Mammary epithelial cell (primary cell): ENCODE measurements at regions of chr2 and their contacts with region 1.

Region 1: GRCh38 chr2:128321784-128322714 is 3.4 kb upstream of the HS6ST1 start:
- DNase-seq: peak; percentile 67
- H3K4me3 ChIP-seq: peak overlapping the region; percentile 47 to 69 (median 50)
- H3K27ac ChIP-seq: peak overlapping the region; percentile 44
- H3K4me1 ChIP-seq: peaks cover 13% of the 10 kb centered on the region
- H3K27me3 ChIP-seq: no peaks in the 10 kb centered on the region
- CTCF ChIP-seq: peak; percentile 63 to 78

Region 2: DNA sequence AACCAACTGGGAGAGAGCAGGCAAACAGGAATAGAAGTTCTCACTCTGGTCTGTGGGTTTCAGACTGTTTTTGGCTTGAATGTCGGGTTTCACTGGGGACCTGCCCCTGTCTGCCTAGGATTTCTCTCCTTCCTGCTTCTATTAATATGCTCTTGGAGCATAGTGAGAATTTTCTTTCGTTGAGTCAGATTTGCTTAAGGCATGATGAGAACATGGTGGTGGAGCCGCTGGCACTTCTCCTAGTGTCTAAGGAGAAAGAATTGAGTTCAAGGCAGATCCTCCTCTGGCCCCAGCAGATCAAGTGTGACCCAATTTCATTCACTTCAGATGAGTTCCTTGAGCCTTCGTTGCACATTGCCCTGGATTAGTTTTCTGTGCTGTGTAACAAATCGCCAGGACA is 100.5 kb after region 1 on chr2:
- CTCF ChIA-PET with region 1: no interaction called
- dilution Hi-C with region 1: no loop called
- in situ Hi-C with region 1: no loop called
- intact Hi-C with region 1: loop called (anchors 5 kb)
- DNase-seq: peak; percentile 72
- H3K4me3 ChIP-seq: no peak overlapping the region
- H3K27ac ChIP-seq: peak overlapping the region; percentile 35
- H3K4me1 ChIP-seq: peaks cover 16% of the 10 kb centered on the region
- H3K27me3 ChIP-seq: no peaks in the 10 kb centered on the region
- CTCF ChIP-seq: no peak

Region 3: DNA sequence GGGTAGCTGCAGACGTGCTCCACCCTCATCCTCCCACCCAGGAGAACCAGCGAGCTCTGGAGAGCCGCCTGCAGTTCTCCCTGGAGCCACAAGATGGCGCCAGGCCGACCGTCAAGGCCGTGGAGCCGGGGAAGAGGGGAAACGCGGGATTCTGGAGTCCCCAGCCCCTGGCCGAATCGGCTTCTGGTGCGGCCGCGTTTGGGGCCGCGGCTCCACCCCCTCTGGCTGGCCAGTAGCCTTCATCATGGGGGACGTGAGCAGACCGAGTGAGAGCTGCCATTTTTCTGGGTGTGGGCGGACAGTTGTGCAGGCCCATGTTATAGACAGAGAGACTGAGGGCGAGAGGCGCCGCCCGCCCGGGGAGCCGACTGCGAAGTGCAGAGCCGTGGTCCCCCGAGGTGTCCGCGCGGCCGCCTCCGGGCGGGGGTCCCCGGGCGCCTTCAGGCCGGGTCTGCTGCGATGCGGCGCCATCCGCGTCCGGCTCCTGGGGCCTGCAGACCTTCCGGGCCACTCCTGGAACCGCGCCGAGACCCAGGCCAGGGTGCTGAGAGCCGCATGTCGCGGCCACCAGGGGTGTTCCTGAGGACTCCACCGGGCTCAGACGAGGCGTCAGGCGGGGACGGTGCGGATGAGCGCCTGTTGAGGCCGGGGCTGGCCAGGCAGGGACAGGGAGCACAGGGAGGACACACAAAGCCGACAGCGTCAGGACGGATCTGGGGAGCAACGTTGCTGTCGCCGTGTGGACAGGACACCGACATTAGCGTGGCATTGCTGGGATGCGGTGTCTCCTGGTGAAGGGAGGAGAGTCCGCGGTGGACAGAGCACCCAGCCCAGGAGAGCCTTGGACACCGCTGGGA is 414.9 kb after region 1 on chr2:
- CTCF ChIA-PET with region 1: no interaction called
- dilution Hi-C with region 1: no loop called
- in situ Hi-C with region 1: loop called in 1 of 2 experiments (anchors 25 kb)
- intact Hi-C with region 1: loop called (anchors 5 kb)
- DNase-seq: peak; percentile 49
- H3K4me3 ChIP-seq: peak overlapping the region in 2 of 3 experiments; percentile 28 to 45
- H3K27ac ChIP-seq: no peak overlapping the region
- H3K4me1 ChIP-seq: peaks cover 13% of the 10 kb centered on the region
- H3K27me3 ChIP-seq: no peaks in the 10 kb centered on the region
- CTCF ChIP-seq: peak; percentile 90 to 100

Region 4: GRCh38 chr2:129296811-129297221 is 974.8 kb after region 1 on chr2:
- CTCF ChIA-PET with region 1: no interaction called
- dilution Hi-C with region 1: no loop called
- in situ Hi-C with region 1: no loop called
- intact Hi-C with region 1: loop called (anchors 5 kb)
- DNase-seq: no peak
- H3K4me3 ChIP-seq: no peak overlapping the region
- H3K27ac ChIP-seq: no peak overlapping the region
- H3K4me1 ChIP-seq: no peaks in the 10 kb centered on the region
- H3K27me3 ChIP-seq: no peaks in the 10 kb centered on the region
- CTCF ChIP-seq: no peak

Region 5: GRCh38 chr2:129923265-129924091 is 1601.4 kb after region 1 on chr2:
- CTCF ChIA-PET with region 1: no interaction called
- dilution Hi-C with region 1: no loop called
- in situ Hi-C with region 1: no loop called
- intact Hi-C with region 1: loop called (anchors 5 kb)
- DNase-seq: peak; percentile 25
- H3K4me3 ChIP-seq: no peak overlapping the region
- H3K27ac ChIP-seq: no peak overlapping the region
- H3K4me1 ChIP-seq: no peaks in the 10 kb centered on the region
- H3K27me3 ChIP-seq: peaks cover 6% of the 10 kb centered on the region
- CTCF ChIP-seq: peak; percentile 53 to 56